Endothelial cell of umbilical vein (primary cell): ENCODE measurements at regions of chr21 and their contacts with region 1.

Region 1: DNA sequence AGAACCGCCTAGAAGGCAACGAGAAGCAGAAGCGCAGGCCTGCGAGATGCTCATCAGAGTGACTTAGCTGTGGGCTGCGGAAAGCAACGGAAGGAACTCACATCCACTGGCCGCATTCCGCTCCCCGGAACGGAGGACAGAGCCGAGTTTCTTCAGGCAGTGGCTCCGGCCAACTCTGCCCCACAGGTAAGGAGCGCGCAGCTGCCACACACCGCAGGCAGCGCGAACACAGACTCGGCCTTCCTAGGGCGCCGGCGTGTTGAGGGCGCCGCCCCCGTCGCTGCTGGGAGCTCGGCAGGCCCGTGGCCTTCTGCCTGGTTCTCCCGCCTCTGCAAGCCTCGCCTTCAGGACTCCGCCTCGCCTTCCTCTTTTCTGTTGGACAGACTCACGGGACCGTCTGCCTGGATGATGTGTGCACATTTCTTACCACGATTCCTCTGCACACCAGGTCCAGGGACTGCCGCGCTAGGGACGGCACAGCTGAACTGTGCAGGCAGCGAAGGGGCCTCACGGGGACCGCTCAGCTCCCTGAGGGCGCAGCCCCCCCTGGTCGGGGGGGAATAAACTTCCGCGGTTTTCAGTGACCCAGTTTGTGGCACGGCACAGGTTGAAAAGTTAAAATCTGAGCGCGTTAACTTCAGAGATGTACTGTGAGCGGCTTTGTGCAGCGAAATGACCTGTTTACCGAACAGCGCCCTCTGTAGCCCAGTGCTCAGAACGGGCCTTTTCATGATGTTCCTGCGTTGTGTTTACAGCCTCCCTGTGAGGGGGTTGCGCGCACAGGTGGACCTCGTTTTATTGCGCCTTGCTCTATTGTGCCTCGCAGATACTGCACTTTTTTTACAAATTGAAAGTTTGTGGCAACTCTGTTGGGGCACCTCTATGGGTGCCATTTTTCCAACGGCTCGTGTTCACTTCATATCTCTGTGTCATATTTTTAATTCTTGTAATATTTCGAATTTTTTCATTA is 15.8 kb downstream of the TCP10L start:
- DNase-seq: peak; percentile 87
- H3K4me3 ChIP-seq: peak overlapping the region; percentile 38 to 71 (median 62)
- H3K27ac ChIP-seq: peak overlapping the region; percentile 79
- H3K4me1 ChIP-seq: peaks cover 11% of the 10 kb centered on the region
- H3K27me3 ChIP-seq: no peaks in the 10 kb centered on the region
- CTCF ChIP-seq: peak; percentile 85 to 90
- POLR2A ChIP-seq: peak; percentile 66

Region 2: GRCh38 chr21:32382108-32382644 is 187.4 kb before region 1 on chr21:
- CTCF ChIA-PET with region 1: interaction called, 12 read pairs
- POLR2A ChIA-PET with region 1: no interaction called
- dilution Hi-C with region 1: no loop called
- intact Hi-C with region 1: no loop called
- DNase-seq: no peak
- H3K4me3 ChIP-seq: no peak overlapping the region
- H3K27ac ChIP-seq: no peak overlapping the region
- H3K4me1 ChIP-seq: peaks cover 8% of the 10 kb centered on the region
- H3K27me3 ChIP-seq: no peaks in the 10 kb centered on the region
- CTCF ChIP-seq: no peak
- POLR2A ChIP-seq: no peak

Region 3: DNA sequence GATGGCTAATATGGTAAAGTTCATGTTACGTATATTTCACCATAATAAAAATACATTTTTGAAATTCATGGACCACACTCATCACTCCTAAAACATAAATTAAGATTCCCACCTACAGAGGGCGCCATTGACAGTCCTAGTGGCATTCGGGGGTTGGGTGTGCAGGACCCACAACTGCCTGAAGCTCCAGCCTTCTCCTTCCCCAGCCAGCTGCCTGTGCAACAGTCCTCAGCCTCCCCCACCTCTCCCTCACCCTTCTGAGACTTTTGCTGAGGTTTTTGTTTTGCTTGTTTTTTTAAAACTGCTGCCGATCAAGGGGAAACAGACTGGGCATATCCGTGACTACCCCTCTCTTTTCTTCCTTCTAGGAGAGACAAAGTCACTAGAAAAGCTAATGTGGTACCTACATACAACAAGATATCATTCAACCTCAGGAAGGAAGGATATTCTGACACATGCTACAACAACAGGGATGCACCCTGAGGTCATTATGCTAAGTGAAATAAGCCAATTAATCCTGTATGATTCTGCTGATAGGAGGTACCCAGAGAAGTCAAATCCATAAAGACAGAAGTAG is 166.3 kb before region 1 on chr21:
- CTCF ChIA-PET with region 1: interaction called, 70 read pairs
- POLR2A ChIA-PET with region 1: interaction called, 3 read pairs
- dilution Hi-C with region 1: no loop called
- intact Hi-C with region 1: loop called (anchors 1 kb)
- DNase-seq: peak; percentile 86
- H3K4me3 ChIP-seq: no peak overlapping the region
- H3K27ac ChIP-seq: peak overlapping the region; percentile 22
- H3K4me1 ChIP-seq: peaks cover 16% of the 10 kb centered on the region
- H3K27me3 ChIP-seq: no peaks in the 10 kb centered on the region
- CTCF ChIP-seq: peak; percentile 63 to 66
- POLR2A ChIP-seq: no peak

Region 4: GRCh38 chr21:32457360-32457840 is 112.1 kb before region 1 on chr21:
- CTCF ChIA-PET with region 1: interaction called, 11 read pairs
- POLR2A ChIA-PET with region 1: no interaction called
- dilution Hi-C with region 1: no loop called
- intact Hi-C with region 1: no loop called
- DNase-seq: peak; percentile 61
- H3K4me3 ChIP-seq: no peak overlapping the region
- H3K27ac ChIP-seq: peak overlapping the region; percentile 69
- H3K4me1 ChIP-seq: peaks cover 23% of the 10 kb centered on the region
- H3K27me3 ChIP-seq: no peaks in the 10 kb centered on the region
- CTCF ChIP-seq: no peak
- POLR2A ChIP-seq: no peak

Region 5: DNA sequence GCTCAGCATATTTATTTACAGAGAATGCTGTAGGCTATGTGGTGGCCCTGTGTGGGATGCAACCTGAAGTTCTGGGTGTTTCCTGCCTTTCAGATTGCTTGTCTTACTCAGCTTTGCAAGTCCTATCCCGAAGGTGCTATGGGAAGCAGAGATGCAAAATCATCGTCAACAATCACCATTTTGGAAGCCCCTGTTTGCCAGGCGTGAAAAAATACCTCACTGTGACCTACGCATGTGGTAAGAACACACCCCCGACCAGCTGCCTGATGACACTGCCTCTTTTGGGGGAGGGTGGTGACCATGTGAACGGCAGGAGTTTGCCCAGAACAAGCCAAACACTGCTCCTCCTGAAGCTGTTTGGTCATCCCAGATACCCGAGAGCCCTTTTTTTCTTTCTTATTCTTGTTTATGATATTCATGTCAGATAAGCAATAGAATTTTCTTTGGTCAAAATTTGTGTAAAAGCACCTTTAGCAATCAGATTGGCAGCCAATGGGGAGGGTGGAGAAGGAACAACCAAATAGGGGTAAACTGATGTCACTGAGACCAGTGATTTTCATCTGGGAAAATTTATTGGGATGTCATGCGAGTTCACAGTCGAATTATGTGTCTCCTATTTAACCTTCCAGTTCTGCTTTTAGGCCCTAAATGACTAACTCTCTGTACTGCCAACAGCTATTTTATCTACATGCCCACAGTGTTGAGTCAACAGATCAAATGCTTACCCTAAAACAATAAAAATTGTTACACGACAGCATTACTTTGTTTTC is 74.4 kb before region 1 on chr21:
- CTCF ChIA-PET with region 1: interaction called, 4 read pairs
- POLR2A ChIA-PET with region 1: no interaction called
- dilution Hi-C with region 1: no loop called
- intact Hi-C with region 1: loop called (anchors 1 kb)
- DNase-seq: peak; percentile 91
- H3K4me3 ChIP-seq: no peak overlapping the region
- H3K27ac ChIP-seq: peak overlapping the region; percentile 95
- H3K4me1 ChIP-seq: peaks cover 73% of the 10 kb centered on the region
- H3K27me3 ChIP-seq: no peaks in the 10 kb centered on the region
- CTCF ChIP-seq: no peak
- POLR2A ChIP-seq: peak; percentile 20

Region 6: DNA sequence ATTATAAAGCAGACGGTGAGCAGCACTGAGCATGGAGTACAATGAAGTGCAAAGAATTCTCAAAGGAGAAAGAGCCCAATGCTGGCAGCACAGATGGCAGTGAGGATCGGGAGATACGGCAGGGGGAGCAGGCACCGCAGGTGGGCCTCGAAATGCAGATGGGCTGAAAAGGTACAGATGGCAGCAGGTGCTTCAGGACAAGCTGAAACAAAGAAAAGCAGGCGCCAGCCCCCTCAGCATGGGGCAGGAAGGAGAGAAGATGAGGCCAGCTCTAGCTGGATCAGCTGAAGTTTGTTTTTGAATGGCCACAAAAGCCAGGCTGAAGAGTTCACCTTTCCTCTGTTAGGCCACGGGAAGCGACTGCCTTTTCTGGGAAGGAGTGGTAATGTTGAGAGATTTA is 34.9 kb after region 1 on chr21:
- CTCF ChIA-PET with region 1: interaction called, 29 read pairs
- POLR2A ChIA-PET with region 1: interaction called, 8 read pairs
- dilution Hi-C with region 1: no loop called
- intact Hi-C with region 1: loop called (anchors 2 kb)
- DNase-seq: no peak
- H3K4me3 ChIP-seq: no peak overlapping the region
- H3K27ac ChIP-seq: no peak overlapping the region
- H3K4me1 ChIP-seq: no peaks in the 10 kb centered on the region
- H3K27me3 ChIP-seq: no peaks in the 10 kb centered on the region
- CTCF ChIP-seq: no peak
- POLR2A ChIP-seq: no peak